HepG2 (cell line): ENCODE measurements at regions of chr15 and their contacts with region 1.

Region 1: GRCh38 chr15:75042730-75043508 is 19.5 kb downstream of the PPCDC start:
- DNase-seq: peak; percentile 93
- ATAC-seq: peak; percentile 77
- H3K4me3 ChIP-seq: peak overlapping the region in 1 of 3 experiments; percentile 45; a peak in 2 of 6 replicates
- H3K27ac ChIP-seq: peak overlapping the region; percentile 79
- H3K4me1 ChIP-seq: peaks cover 76% of the 10 kb centered on the region
- H3K27me3 ChIP-seq: no peaks in the 10 kb centered on the region
- CTCF ChIP-seq: peak; percentile 99
- EP300 ChIP-seq: peak in 1 of 2 experiments; percentile 69; a peak in 3 of 4 replicates
- POLR2A ChIP-seq: no peak; a peak in 1 of 4 replicates
- RAD21 ChIP-seq: peak; percentile 98

Region 2: GRCh38 chr15:74716644-74717043 is 326.3 kb before region 1 on chr15:
- CTCF ChIA-PET with region 1: no interaction called
- POLR2A ChIA-PET with region 1: no interaction called
- in situ Hi-C with region 1: no loop called
- intact Hi-C with region 1: no loop called
- DNase-seq: peak; percentile 52
- ATAC-seq: peak; percentile 66
- H3K4me3 ChIP-seq: no peak overlapping the region
- H3K27ac ChIP-seq: no peak overlapping the region
- H3K4me1 ChIP-seq: peaks cover 11% of the 10 kb centered on the region
- H3K27me3 ChIP-seq: no peaks in the 10 kb centered on the region
- CTCF ChIP-seq: no peak
- EP300 ChIP-seq: 0 out of 4 replicates have a peak, but pooled peaks of 1 of the 2 experiments have one; percentile 25
- POLR2A ChIP-seq: no peak
- RAD21 ChIP-seq: no peak

Region 3: GRCh38 chr15:75023181-75023871 is 19.6 kb before region 1 on chr15 and contains the start of gene PPCDC:
- CTCF ChIA-PET with region 1: no interaction called
- POLR2A ChIA-PET with region 1: interaction called, 19 read pairs
- in situ Hi-C with region 1: no loop called
- intact Hi-C with region 1: no loop called
- DNase-seq: peak; percentile 94
- ATAC-seq: peak; percentile 98
- H3K4me3 ChIP-seq: peak within 1 kb of the TSS; percentile 87 to 95 (median 94)
- H3K27ac ChIP-seq: peak within 1 kb of the TSS; percentile 80
- H3K4me1 ChIP-seq: peaks cover 25% of the 10 kb centered on the region
- H3K27me3 ChIP-seq: no peaks in the 10 kb centered on the region
- CTCF ChIP-seq: no peak
- EP300 ChIP-seq: 0 out of 4 replicates have a peak, but pooled peaks of 1 of the 2 experiments have one; percentile 37
- POLR2A ChIP-seq: peak; percentile 95 to 98
- RAD21 ChIP-seq: peak; percentile 45
- total RNA-seq, gene PPCDC: 9.9 and 12.3 TPM in 2 replicates

Region 4: GRCh38 chr15:75065467-75065850 is 22.5 kb after region 1 on chr15:
- CTCF ChIA-PET with region 1: no interaction called
- POLR2A ChIA-PET with region 1: interaction called, 14 read pairs
- in situ Hi-C with region 1: no loop called
- intact Hi-C with region 1: no loop called
- DNase-seq: peak; percentile 85
- ATAC-seq: peak; percentile 87
- H3K4me3 ChIP-seq: peak overlapping the region; percentile 9 to 54 (median 29); a peak in 4 of 6 replicates
- H3K27ac ChIP-seq: peak overlapping the region; percentile 54
- H3K4me1 ChIP-seq: peaks cover 91% of the 10 kb centered on the region
- H3K27me3 ChIP-seq: no peaks in the 10 kb centered on the region
- CTCF ChIP-seq: no peak
- EP300 ChIP-seq: 0 out of 4 replicates have a peak, but pooled peaks of 1 of the 2 experiments have one; percentile 48
- POLR2A ChIP-seq: no peak
- RAD21 ChIP-seq: no peak; the same call in 1 of the 2 replicates

Region 5: DNA sequence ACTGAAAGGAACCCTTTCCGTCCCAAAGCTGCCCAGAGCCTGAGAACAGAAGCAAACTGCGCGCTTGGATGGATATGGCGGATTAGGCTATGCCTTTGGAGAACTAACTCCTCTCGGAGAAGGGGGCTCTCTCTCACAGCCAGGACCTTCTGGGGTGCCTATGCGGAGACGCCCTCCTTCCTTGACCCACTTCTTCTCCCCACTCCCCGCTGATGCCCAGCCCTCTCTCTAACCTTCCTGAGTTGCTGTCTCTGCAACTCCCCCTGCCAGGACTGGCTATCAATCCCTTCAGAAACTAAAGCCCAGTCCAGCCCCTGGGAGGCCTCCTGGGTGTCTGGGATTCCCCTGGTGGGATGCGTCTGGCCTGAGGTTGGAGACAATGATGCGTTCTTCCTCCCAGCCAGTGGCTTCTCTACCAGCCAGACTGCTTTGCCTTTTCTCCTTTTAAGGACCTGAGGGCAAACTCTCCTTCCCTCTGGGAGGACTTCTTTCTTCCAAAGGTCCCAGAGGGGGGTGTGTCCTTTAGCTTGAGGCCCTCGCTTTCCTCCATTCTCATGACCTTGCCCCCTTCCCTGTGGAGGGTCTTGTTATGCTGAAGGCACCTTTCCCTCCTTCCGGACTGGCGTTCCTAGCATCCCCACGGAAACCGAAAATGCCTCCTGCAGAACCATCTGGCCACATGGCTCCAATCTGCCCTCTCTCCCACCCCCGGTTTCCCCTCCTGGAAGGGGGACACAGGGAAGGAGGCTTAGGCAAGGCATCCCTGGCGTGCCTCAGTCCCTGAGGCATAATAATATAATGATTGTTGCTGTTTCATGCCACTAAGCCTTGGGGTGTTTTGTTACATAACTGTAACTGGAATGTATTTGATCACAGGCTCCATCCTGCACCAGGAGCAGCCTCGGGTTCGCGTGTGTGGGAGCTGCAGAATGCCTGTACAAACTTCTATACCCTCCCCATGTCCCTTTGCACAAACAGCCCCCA is 95.4 kb after region 1 on chr15:
- CTCF ChIA-PET with region 1: no interaction called
- POLR2A ChIA-PET with region 1: interaction called, 58 read pairs
- in situ Hi-C with region 1: no loop called
- intact Hi-C with region 1: loop called (anchors 1 kb)
- DNase-seq: no peak
- ATAC-seq: no peak
- H3K4me3 ChIP-seq: no peak overlapping the region
- H3K27ac ChIP-seq: peak overlapping the region; percentile 96
- H3K4me1 ChIP-seq: peaks cover 71% of the 10 kb centered on the region
- H3K27me3 ChIP-seq: no peaks in the 10 kb centered on the region
- CTCF ChIP-seq: no peak
- EP300 ChIP-seq: no peak
- POLR2A ChIP-seq: no peak
- RAD21 ChIP-seq: no peak

Region 6: DNA sequence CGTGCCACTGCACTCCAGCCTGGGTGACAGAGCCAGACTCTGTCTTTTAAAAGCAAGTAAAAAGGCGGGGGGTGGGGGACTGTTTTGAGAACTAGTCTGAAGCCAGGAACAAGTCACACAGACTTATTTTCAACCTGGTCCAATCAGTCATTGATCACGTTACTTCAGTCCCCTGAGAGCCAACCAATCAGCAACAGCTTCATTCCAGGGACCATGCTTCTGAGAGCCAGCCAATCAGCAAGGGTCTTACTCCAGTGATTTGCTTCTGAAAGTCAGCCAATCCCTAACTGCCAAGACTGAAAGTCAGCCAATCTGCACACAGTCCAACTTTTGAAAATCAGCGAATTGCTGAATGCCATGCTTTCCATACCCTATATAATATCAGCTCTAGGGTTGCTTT is 110.2 kb after region 1 on chr15:
- CTCF ChIA-PET with region 1: no interaction called
- POLR2A ChIA-PET with region 1: interaction called, 10 read pairs
- in situ Hi-C with region 1: no loop called
- intact Hi-C with region 1: no loop called
- DNase-seq: peak; percentile 82
- ATAC-seq: peak; percentile 67
- H3K4me3 ChIP-seq: no peak overlapping the region
- H3K27ac ChIP-seq: peak overlapping the region; percentile 5
- H3K4me1 ChIP-seq: peaks cover 67% of the 10 kb centered on the region
- H3K27me3 ChIP-seq: no peaks in the 10 kb centered on the region
- CTCF ChIP-seq: no peak
- EP300 ChIP-seq: no peak
- POLR2A ChIP-seq: no peak
- RAD21 ChIP-seq: no peak

Region 7: DNA sequence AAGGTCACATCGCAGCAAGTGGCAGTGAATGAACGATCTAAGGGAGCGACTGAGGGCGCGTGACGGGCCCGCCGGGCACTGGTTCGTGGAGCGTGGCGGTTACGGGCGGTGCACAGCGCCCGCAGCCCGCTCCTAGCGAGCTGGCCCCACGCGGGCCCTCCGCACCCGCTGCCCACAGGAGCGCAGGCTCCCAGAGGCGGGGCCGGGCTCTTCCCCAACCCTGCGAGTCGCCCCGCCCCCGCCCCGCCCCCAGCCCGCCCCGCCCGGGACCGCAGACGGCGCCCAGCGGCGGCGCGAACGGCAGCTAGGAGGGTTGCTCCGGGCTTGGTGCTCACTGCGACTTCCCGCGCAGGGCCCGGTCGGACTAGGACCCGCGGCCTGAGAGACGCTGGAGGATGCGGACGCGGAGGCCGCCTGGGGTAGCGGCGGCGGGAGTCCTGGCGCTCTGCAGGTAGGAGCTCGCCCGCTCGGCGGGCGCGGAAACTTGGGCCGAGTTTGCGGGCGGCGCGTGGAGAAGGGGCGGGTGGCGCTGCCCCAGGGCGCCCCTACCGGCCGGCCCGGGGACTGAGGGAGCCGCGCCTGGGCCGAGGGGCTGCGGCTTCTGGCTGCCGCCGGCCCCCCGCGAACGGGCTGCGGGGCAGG is 158.8 kb after region 1 on chr15 and contains the start of gene C15orf39:
- CTCF ChIA-PET with region 1: interaction called, 54 read pairs
- POLR2A ChIA-PET with region 1: interaction called, 60 read pairs
- in situ Hi-C with region 1: no loop called
- intact Hi-C with region 1: loop called (anchors 1 kb)
- DNase-seq: peak; percentile 33
- ATAC-seq: peak; percentile 63
- H3K4me3 ChIP-seq: peak within 1 kb of the TSS; percentile 88 to 98 (median 91)
- H3K27ac ChIP-seq: peak within 1 kb of the TSS; percentile 80
- H3K4me1 ChIP-seq: peaks cover 77% of the 10 kb centered on the region
- H3K27me3 ChIP-seq: no peaks in the 10 kb centered on the region; a peak in 1 of 5 replicates
- CTCF ChIP-seq: peak; percentile 67
- EP300 ChIP-seq: no peak
- POLR2A ChIP-seq: peak in 1 of 2 experiments; percentile 89; a peak in 2 of 4 replicates
- RAD21 ChIP-seq: peak; percentile 85
- total RNA-seq, gene C15orf39: 13.5 and 17.5 TPM in 2 replicates

Region 8: GRCh38 chr15:75453703-75454470 is 411.0 kb after region 1 on chr15:
- CTCF ChIA-PET with region 1: no interaction called
- POLR2A ChIA-PET with region 1: no interaction called
- in situ Hi-C with region 1: no loop called
- intact Hi-C with region 1: loop called (anchors 1 kb)
- DNase-seq: peak; percentile 100
- ATAC-seq: peak; percentile 38
- H3K4me3 ChIP-seq: peak overlapping the region; percentile 91 to 93 (median 93)
- H3K27ac ChIP-seq: peak overlapping the region; percentile 94
- H3K4me1 ChIP-seq: peaks cover 37% of the 10 kb centered on the region
- H3K27me3 ChIP-seq: no peaks in the 10 kb centered on the region; a peak in 1 of 5 replicates
- CTCF ChIP-seq: no peak
- EP300 ChIP-seq: no peak
- POLR2A ChIP-seq: peak in 1 of 2 experiments; percentile 62; a peak in 2 of 4 replicates
- RAD21 ChIP-seq: no peak